K562 (cell line): ENCODE measurements at regions of chr12 and their contacts with region 1.

Region 1: GRCh38 chr12:57552835-57553313 is 3.0 kb downstream of the KIF5A start:
- DNase-seq: peak; percentile 24 to 81 (median 51)
- ATAC-seq: peak; percentile 51
- H3K4me3 ChIP-seq: peak overlapping the region; percentile 69
- H3K27ac ChIP-seq: peak overlapping the region; percentile 90
- H3K4me1 ChIP-seq: peaks cover 50 to 63% of the 10 kb centered on the region in 2 experiments
- H3K27me3 ChIP-seq: no peaks in the 10 kb centered on the region
- CTCF ChIP-seq: no peak
- EP300 ChIP-seq: no peak
- POLR2A ChIP-seq: no peak
- RAD21 ChIP-seq: no peak

Region 2: GRCh38 chr12:57416039-57416996 is 136.6 kb before region 1 on chr12:
- CTCF ChIA-PET with region 1: no interaction called
- POLR2A ChIA-PET with region 1: no interaction called
- in situ Hi-C with region 1: no loop called
- intact Hi-C with region 1: no loop called
- DNase-seq: no peak
- ATAC-seq: peak; percentile 26; the same call in 2 of the 3 replicates
- H3K4me3 ChIP-seq: no peak overlapping the region
- H3K27ac ChIP-seq: no peak overlapping the region
- H3K4me1 ChIP-seq: peaks cover 14 to 22% of the 10 kb centered on the region in 2 experiments
- H3K27me3 ChIP-seq: no peaks in the 10 kb centered on the region
- CTCF ChIP-seq: no peak
- EP300 ChIP-seq: no peak
- POLR2A ChIP-seq: no peak
- RAD21 ChIP-seq: no peak

Region 3: GRCh38 chr12:57534991-57535543 is 17.8 kb before region 1 on chr12:
- CTCF ChIA-PET with region 1: no interaction called
- POLR2A ChIA-PET with region 1: interaction called, 17 read pairs
- in situ Hi-C with region 1: no loop called
- intact Hi-C with region 1: loop called (anchors 2 kb)
- DNase-seq: no peak
- ATAC-seq: no peak
- H3K4me3 ChIP-seq: no peak overlapping the region
- H3K27ac ChIP-seq: no peak overlapping the region
- H3K4me1 ChIP-seq: peaks cover 14 to 27% of the 10 kb centered on the region in 2 experiments
- H3K27me3 ChIP-seq: no peaks in the 10 kb centered on the region
- CTCF ChIP-seq: no peak
- EP300 ChIP-seq: no peak
- POLR2A ChIP-seq: no peak
- RAD21 ChIP-seq: no peak

Region 4: GRCh38 chr12:57541001-57541400 is 11.9 kb before region 1 on chr12:
- CTCF ChIA-PET with region 1: no interaction called
- POLR2A ChIA-PET with region 1: interaction called, 17 read pairs
- in situ Hi-C with region 1: no loop called
- intact Hi-C with region 1: loop called (anchors 2 kb)
- DNase-seq: peak in 1 of 4 experiments; percentile 36
- ATAC-seq: no peak
- H3K4me3 ChIP-seq: no peak overlapping the region
- H3K27ac ChIP-seq: peak overlapping the region; percentile 78
- H3K4me1 ChIP-seq: peaks cover 23 to 63% of the 10 kb centered on the region in 2 experiments
- H3K27me3 ChIP-seq: no peaks in the 10 kb centered on the region
- CTCF ChIP-seq: no peak
- EP300 ChIP-seq: no peak
- POLR2A ChIP-seq: no peak
- RAD21 ChIP-seq: no peak

Region 5: DNA sequence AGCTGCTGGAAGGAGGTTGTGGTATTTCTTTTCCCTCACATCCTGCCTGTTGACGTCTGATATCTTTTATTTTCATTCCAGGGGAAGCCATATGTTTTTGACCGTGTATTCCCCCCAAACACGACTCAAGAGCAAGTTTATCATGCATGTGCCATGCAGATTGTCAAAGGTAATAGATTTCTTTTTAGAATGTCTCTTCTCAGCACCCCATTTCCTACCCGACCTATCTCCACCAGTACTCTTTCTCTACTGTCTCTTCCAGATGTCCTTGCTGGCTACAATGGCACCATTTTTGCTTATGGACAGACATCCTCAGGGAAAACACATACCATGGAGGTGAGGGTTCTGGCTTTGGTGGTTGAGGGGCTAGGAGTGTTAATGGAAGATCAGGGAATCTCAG is 10.5 kb after region 1 on chr12:
- CTCF ChIA-PET with region 1: no interaction called
- POLR2A ChIA-PET with region 1: interaction called, 16 read pairs
- in situ Hi-C with region 1: no loop called
- intact Hi-C with region 1: no loop called
- DNase-seq: no peak
- ATAC-seq: no peak
- H3K4me3 ChIP-seq: no peak overlapping the region
- H3K27ac ChIP-seq: no peak overlapping the region
- H3K4me1 ChIP-seq: peaks cover 2 to 10% of the 10 kb centered on the region in 2 experiments; a peak in 2 of 5 replicates
- H3K27me3 ChIP-seq: no peaks in the 10 kb centered on the region
- CTCF ChIP-seq: no peak
- EP300 ChIP-seq: no peak
- POLR2A ChIP-seq: no peak
- RAD21 ChIP-seq: no peak